Pancreas (tissue), 10 donors: ENCODE measurements at regions of chr2 and their contacts with region 1.

Region 1: GRCh38 chr2:172102391-172103278 is at the start of gene DLX2:
- DNase-seq: peak; percentile 70 to 90 (median 79)
- ATAC-seq: peak; percentile 75 to 84 (median 78)
- H3K4me3 ChIP-seq: peak within 1 kb of the TSS; percentile 10 to 58 (median 30)
- H3K27ac ChIP-seq: no peak within 1 kb of the TSS
- H3K4me1 ChIP-seq: peaks cover 8 to 27% (median 10%) of the 10 kb centered on the region in 3 donors
- H3K27me3 ChIP-seq: peaks cover 10 to 70% (median 25%) of the 10 kb centered on the region in 4 donors
- CTCF ChIP-seq: no peak
- total RNA-seq, gene DLX2: not detected

Region 2: DNA sequence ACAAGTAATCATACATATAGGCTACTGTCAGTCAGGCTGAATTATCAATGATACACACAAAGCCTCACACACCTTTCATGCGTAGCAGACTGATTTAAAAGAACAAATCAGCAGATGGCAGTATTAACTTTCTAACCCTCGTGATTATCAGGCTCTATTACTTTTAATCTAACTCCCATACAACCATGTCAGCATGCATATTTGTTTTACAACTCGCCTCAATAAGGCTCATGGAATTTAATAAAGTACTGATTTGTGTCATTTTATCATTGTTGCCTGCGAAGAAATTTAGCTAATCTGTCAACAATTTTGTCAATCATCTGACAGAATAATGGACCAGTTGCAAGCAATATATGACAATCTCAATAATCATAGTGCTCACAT is 291.4 kb before region 1 on chr2:
- intact Hi-C with region 1: loop called in 2 of 3 experiments (anchors 5 to 10 kb)
- DNase-seq: no peak
- ATAC-seq: peak in 3 of 4 donors; percentile 71 to 82 (median 78)
- H3K4me3 ChIP-seq: no peak overlapping the region
- H3K27ac ChIP-seq: no peak overlapping the region
- H3K4me1 ChIP-seq: no peaks in the 10 kb centered on the region
- H3K27me3 ChIP-seq: no peaks in the 10 kb centered on the region
- CTCF ChIP-seq: no peak